Gastrocnemius medialis (tissue), 4 donors: ENCODE measurements at regions of chr12 and their contacts with region 1.

Region 1: DNA sequence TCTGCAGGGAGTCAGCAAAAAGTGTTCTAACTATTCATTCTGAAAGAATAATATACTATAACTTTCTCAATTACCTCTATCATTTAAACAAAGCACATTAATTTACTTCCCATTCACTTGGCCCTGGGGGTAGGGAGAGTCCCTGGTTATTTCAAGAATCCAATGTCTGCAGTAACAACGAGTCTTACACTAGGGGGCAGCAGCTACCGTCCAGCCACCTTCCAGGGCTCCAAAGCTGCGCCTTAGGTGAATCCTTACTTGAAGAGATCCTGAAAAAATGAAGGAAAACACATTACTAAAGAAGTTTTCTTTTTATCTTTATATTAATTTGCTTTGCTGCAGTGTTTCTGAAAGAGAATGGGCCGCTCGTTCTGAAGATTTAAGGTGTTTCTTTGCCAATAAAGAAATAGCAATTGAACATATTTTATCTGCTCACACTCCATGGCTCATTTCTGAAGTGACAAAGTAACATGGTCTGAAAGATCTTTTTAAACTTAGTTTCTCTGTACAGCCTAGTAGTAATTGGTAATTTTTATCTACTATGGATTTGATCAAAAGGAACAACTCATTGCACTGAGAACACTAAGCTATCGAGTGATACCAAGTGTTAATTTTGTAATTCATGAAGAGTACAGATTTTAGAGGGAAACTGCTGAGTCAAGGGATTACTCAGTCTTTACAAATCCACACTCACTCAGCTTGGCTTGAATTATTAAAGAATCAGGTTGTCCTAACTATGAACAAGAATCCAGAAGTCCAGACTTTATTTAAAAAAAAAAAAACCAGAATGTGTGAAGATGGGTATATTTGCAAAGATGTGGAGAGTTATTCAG is 27.6 kb downstream of the BHLHE41 start:
- DNase-seq: peak; percentile 49 to 67
- ATAC-seq: peak; percentile 95 to 98
- H3K4me3 ChIP-seq: no peak overlapping the region
- H3K27ac ChIP-seq: no peak overlapping the region
- H3K4me1 ChIP-seq: peaks cover 4 to 5% of the 10 kb centered on the region in 2 donors
- H3K27me3 ChIP-seq: no peaks in the 10 kb centered on the region
- CTCF ChIP-seq: peak; percentile 84 to 98 (median 88)
- POLR2A ChIP-seq: no peak

Region 2: GRCh38 chr12:25058658-25059058 is 1038.6 kb before region 1 on chr12:
- in situ Hi-C with region 1: no loop called
- intact Hi-C with region 1: no loop called
- DNase-seq: no peak
- ATAC-seq: no peak
- H3K4me3 ChIP-seq: no peak overlapping the region
- H3K27ac ChIP-seq: no peak overlapping the region
- H3K4me1 ChIP-seq: no peaks in the 10 kb centered on the region
- H3K27me3 ChIP-seq: no peaks in the 10 kb centered on the region
- CTCF ChIP-seq: no peak
- POLR2A ChIP-seq: no peak

Region 3: DNA sequence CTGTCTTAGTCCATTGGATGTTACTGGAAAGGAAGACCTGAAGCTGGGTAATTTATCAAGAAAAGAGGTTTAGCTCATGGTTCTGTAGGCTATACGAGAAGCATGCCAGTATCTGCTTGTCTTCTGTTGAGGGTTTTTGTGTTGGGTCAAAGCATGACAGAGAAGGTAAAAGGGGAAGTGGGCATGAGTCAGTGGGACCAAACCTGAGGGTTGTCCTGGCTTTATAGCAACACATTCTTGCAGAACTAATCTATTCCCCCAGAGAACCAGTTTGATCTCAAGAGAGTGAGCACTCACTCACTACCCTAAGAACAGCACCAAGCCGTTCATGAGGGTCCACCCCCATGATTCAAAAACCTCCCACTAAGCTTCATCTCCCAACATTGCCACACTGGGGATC is 827.6 kb before region 1 on chr12:
- in situ Hi-C with region 1: no loop called
- intact Hi-C with region 1: no loop called
- DNase-seq: no peak
- ATAC-seq: no peak
- H3K4me3 ChIP-seq: no peak overlapping the region
- H3K27ac ChIP-seq: no peak overlapping the region
- H3K4me1 ChIP-seq: no peaks in the 10 kb centered on the region
- H3K27me3 ChIP-seq: no peaks in the 10 kb centered on the region
- CTCF ChIP-seq: no peak
- POLR2A ChIP-seq: no peak

Region 4: GRCh38 chr12:25993901-25994651 is 103.2 kb before region 1 on chr12:
- in situ Hi-C with region 1: no loop called
- intact Hi-C with region 1: no loop called
- DNase-seq: no peak
- ATAC-seq: peak in 1 of 2 donors; percentile 55
- H3K4me3 ChIP-seq: no peak overlapping the region
- H3K27ac ChIP-seq: peak overlapping the region; percentile 6 to 39 (median 20)
- H3K4me1 ChIP-seq: peaks cover 59 to 63% of the 10 kb centered on the region in 2 donors
- H3K27me3 ChIP-seq: no peaks in the 10 kb centered on the region
- CTCF ChIP-seq: no peak
- POLR2A ChIP-seq: no peak

Region 5: GRCh38 chr12:26126340-26127284 is 29.4 kb after region 1 on chr12:
- in situ Hi-C with region 1: no loop called
- intact Hi-C with region 1: no loop called
- DNase-seq: peak; percentile 89 to 92
- ATAC-seq: peak; percentile 51
- H3K4me3 ChIP-seq: peak overlapping the region; percentile 66 to 89 (median 72)
- H3K27ac ChIP-seq: peak overlapping the region; percentile 95 to 100 (median 97)
- H3K4me1 ChIP-seq: peaks cover 11 to 12% of the 10 kb centered on the region in 2 donors
- H3K27me3 ChIP-seq: no peaks in the 10 kb centered on the region
- CTCF ChIP-seq: no peak
- POLR2A ChIP-seq: peak; percentile 32 to 56

Region 6: DNA sequence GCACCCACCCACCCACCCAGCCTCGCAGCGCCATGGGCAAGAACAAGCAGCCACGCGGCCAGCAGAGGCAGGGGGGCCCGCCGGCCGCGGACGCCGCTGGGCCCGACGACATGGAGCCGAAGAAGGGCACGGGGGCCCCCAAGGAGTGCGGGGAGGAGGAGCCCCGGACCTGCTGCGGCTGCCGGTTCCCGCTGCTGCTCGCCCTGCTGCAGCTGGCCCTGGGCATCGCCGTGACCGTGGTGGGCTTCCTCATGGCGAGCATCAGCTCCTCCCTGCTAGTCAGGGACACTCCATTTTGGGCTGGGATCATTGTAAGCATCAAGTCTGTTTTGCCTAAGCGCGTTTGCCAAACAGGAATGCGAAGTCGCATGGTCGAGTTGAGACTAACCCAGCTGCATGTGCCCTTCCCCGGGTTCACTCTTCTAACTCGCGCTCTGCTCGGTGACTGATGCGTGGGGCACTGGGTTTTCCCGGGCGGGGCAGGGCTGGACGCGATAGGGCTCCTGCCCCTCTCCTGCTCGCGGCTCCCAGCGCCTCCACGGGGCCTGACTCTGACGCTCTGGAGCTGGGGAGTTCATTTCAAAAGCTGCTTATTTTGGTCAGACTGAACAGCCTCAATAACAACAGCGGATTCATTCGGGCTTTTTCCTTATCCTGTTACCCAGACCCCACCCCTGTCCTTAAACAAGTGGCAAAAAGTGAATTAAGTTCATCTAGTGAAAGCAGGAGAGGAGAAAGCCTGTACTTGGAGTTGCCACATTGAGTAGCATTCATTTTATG is 98.6 kb after region 1 on chr12:
- in situ Hi-C with region 1: no loop called
- intact Hi-C with region 1: loop called (anchors 1 kb)
- DNase-seq: peak; percentile 39 to 69
- ATAC-seq: peak; percentile 74
- H3K4me3 ChIP-seq: peak overlapping the region; percentile 69 to 91 (median 76)
- H3K27ac ChIP-seq: peak overlapping the region; percentile 84 to 94 (median 92)
- H3K4me1 ChIP-seq: peaks cover 31 to 35% of the 10 kb centered on the region in 2 donors
- H3K27me3 ChIP-seq: no peaks in the 10 kb centered on the region
- CTCF ChIP-seq: no peak
- POLR2A ChIP-seq: peak; percentile 22 to 32

Region 7: DNA sequence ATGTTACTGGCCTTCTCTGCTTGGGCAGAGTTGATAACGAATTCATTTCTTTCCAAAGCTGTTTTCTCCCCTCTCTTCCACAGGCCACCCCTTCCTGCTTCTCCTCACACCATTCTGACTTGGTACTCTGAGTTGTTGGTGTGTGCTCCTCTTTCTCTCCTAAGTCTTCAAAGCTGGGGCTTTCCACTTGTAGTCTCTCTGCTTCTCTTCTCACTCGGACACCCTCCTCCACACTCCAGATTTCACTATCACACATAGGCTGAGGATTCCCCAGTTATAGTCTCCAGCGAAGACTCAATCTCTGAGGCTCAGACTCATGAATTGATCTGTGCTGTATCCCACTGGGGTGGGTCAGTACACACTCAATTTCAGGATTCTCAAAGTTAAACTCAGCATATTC is 299.1 kb after region 1 on chr12:
- in situ Hi-C with region 1: no loop called
- intact Hi-C with region 1: loop called (anchors 10 kb)
- DNase-seq: no peak
- ATAC-seq: no peak
- H3K4me3 ChIP-seq: no peak overlapping the region
- H3K27ac ChIP-seq: no peak overlapping the region
- H3K4me1 ChIP-seq: peaks cover 0 to 3% of the 10 kb centered on the region in 2 donors
- H3K27me3 ChIP-seq: no peaks in the 10 kb centered on the region
- CTCF ChIP-seq: no peak
- POLR2A ChIP-seq: no peak

Region 8: DNA sequence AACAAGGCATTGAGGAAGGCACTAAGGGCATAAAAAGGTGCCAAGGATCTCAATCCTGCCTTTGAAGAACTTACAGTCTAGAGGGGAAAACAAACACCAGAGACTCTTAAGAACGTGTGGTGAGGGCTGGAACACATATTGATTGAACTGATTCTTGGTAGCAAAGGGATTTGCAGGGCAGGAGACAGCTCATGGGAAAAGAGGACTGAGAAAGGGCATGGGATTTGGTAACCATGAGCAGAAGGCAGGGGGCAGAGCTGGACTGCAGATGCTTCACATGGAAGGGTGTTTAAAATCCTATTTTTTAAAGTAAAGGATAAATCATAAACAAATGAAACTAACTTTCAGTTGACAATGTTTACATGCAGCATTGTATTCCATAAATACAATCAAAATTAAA is 532.6 kb after region 1 on chr12:
- in situ Hi-C with region 1: loop called in 2 of 4 experiments (anchors 25 kb)
- intact Hi-C with region 1: no loop called
- DNase-seq: no peak
- ATAC-seq: no peak
- H3K4me3 ChIP-seq: no peak overlapping the region
- H3K27ac ChIP-seq: no peak overlapping the region
- H3K4me1 ChIP-seq: no peaks in the 10 kb centered on the region
- H3K27me3 ChIP-seq: no peaks in the 10 kb centered on the region
- CTCF ChIP-seq: no peak
- POLR2A ChIP-seq: no peak

Region 9: DNA sequence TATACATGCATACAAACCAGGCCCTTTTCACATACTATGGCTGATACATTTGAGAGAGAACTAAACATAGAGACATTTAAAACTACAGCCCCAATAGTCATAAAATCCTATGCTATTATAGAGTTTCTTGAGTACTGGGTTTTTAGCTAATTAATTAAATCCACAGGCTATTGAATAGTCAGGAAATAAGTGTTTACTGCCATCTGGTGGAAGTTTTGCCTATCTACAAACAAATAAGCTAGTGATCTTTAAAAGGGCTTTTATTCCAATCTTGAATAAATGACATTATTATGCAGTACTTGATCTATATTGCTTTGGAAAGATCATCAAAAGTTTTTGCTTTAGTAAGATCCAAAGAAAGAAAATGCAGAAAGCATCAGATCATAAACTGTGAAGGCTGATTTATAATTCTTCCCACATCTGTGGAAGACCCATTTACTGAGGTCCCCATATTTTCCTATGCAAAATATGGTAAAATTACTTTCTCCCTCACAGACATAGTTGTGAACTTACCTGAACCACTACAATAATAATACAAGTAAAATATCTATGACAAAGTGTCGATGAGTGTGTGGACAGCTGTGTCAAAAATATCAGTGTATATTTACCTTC is 604.4 kb after region 1 on chr12:
- in situ Hi-C with region 1: no loop called
- intact Hi-C with region 1: loop called (anchors 5 kb)
- DNase-seq: no peak
- ATAC-seq: no peak
- H3K4me3 ChIP-seq: no peak overlapping the region
- H3K27ac ChIP-seq: no peak overlapping the region
- H3K4me1 ChIP-seq: no peaks in the 10 kb centered on the region
- H3K27me3 ChIP-seq: no peaks in the 10 kb centered on the region
- CTCF ChIP-seq: peak in 4 of 5 experiments; percentile 27 to 58 (median 44)
- POLR2A ChIP-seq: no peak